Endothelial cell of umbilical vein (primary cell): ENCODE measurements at regions of chr6 and their contacts with region 1.

Region 1: DNA sequence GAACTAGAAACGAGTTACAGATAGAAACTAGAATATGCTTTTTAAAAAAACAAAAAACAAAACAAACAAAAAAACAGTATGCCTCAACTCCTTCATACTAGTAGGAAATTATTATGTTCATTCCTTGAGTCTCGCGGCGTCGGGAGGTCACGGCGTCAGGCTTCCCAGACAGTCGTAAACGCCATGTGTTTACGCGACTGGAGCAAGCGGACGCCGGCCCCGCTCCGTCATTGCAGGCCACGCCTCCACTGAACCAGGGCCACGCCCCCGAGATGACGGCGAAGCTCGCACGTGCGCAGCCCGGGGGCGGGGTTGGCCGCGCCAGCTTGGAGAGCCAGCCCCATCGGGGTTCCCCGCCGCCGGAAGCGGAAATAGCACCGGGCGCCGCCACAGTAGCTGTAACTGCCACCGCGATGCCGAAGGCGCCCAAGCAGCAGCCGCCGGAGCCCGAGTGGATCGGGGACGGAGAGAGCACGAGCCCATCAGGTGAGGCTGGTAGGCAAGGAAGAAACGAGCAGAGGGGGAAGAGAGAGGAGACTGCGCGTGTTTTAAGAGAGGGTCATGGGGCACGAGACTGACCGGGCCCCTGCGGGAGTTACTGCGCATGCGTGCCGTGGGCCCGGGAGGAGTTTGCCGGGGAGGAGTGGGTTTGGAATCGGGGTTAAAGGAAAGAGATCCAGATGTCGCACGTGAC is at the start of gene ABCF1:
- DNase-seq: peak; percentile 99
- H3K4me3 ChIP-seq: peak within 1 kb of the TSS; percentile 57 to 86 (median 76)
- H3K27ac ChIP-seq: peak within 1 kb of the TSS; percentile 86
- H3K4me1 ChIP-seq: peaks cover 18% of the 10 kb centered on the region
- H3K27me3 ChIP-seq: no peaks in the 10 kb centered on the region
- CTCF ChIP-seq: no peak
- POLR2A ChIP-seq: no peak
- total RNA-seq, gene ABCF1: 55.8 and 60.3 TPM in 2 replicates

Region 2: GRCh38 chr6:30304002-30304401 is 267.2 kb before region 1 on chr6:
- CTCF ChIA-PET with region 1: no interaction called
- POLR2A ChIA-PET with region 1: no interaction called
- dilution Hi-C with region 1: no loop called
- intact Hi-C with region 1: no loop called
- DNase-seq: no peak
- H3K4me3 ChIP-seq: no peak overlapping the region
- H3K27ac ChIP-seq: no peak overlapping the region
- H3K4me1 ChIP-seq: no peaks in the 10 kb centered on the region
- H3K27me3 ChIP-seq: no peaks in the 10 kb centered on the region
- CTCF ChIP-seq: no peak
- POLR2A ChIP-seq: no peak

Region 3: DNA sequence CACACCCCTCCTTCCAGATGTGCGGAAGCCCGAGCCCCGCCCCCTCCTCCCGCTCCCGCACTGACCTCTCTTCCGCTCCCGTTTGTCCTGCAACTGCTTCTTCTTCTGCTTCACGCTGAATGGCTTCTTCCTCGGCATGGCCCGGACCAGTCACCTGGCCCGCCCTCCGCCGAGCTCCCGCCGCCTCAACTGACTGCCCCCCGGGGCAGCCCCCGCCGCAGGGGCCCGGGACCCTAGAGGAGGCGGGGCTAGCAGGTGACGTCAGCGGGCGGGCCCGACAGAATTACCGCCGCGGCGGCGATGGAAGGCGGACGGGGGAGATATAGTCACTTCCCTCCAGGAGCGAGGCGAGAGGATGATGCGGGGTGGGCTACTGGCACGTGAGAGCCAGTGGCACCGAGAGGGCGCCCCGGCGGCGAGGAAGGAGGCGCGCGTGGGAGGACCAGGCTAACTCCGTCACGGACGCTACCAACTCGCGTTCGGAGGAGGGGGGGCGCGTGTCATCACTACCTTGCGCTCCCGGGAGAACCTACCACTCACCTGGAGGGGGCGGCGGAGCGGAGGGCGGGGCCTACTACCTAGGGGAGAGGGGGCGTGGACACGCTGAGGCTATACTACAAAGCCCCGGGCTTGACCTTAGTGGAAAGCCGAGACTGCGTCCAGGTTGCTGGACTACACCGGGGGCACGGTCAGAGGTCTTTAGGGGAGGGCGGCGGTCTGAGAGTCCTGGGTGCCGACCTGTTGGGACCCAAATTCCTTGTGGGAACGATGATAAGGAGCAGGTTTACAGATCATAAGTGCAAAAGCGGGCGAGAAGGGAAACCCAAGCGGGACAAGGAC is 14.9 kb before region 1 on chr6 and contains the start of gene GNL1:
- CTCF ChIA-PET with region 1: interaction called, 11 read pairs
- POLR2A ChIA-PET with region 1: interaction called, 9 read pairs
- dilution Hi-C with region 1: no loop called
- intact Hi-C with region 1: loop called (anchors 1 kb)
- DNase-seq: peak; percentile 88
- H3K4me3 ChIP-seq: peak within 1 kb of the TSS; percentile 39 to 93 (median 52)
- H3K27ac ChIP-seq: peak within 1 kb of the TSS; percentile 84
- H3K4me1 ChIP-seq: peaks cover 19% of the 10 kb centered on the region
- H3K27me3 ChIP-seq: no peaks in the 10 kb centered on the region
- CTCF ChIP-seq: no peak
- POLR2A ChIP-seq: no peak
- total RNA-seq, gene GNL1: 87.3 and 103 TPM in 2 replicates

Region 4: DNA sequence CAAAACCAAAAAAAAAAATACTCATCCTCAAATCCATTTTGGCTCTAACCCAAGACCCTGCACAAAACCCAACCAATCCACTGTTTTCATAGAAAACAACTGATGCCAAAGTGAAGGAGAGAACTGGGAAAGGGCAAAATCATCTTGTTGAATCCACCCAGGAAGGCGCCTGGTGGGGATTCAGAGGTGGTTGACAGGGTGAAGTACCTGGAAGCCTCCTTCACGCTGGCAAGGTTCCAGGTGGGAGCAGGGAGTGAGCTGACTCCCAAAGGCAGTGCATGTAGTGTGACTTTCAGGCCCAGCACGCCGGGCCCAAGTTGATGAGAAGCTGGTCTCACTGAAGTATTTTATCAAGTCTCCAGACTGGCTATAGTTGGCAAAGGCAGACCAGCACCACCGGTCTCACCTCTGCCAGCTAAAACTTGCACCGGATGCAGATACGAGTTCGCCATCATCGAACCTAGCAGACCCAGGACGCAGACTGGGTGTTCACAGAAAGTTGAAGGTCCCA is 29.3 kb after region 1 on chr6:
- CTCF ChIA-PET with region 1: interaction called, 11 read pairs
- POLR2A ChIA-PET with region 1: no interaction called
- dilution Hi-C with region 1: no loop called
- intact Hi-C with region 1: no loop called
- DNase-seq: no peak
- H3K4me3 ChIP-seq: no peak overlapping the region
- H3K27ac ChIP-seq: no peak overlapping the region
- H3K4me1 ChIP-seq: peaks cover 8% of the 10 kb centered on the region
- H3K27me3 ChIP-seq: no peaks in the 10 kb centered on the region
- CTCF ChIP-seq: no peak
- POLR2A ChIP-seq: peak; percentile 20